Cardiac septum (tissue), 1 donor: ENCODE measurements at regions of chr3 and their contacts with region 1.

Region 1: GRCh38 chr3:157159762-157160657 is at the start of gene CCNL1:
- DNase-seq: peak; percentile 97
- total RNA-seq, gene CCNL1: 41.7 TPM

Region 2: GRCh38 chr3:157174649-157175498 is 14.9 kb after region 1 on chr3:
- intact Hi-C with region 1: loop called (anchors 1 kb)
- DNase-seq: peak; percentile 99

Region 3: GRCh38 chr3:157248590-157249422 is 88.8 kb after region 1 on chr3:
- intact Hi-C with region 1: loop called (anchors 10 kb)
- DNase-seq: peak; percentile 78